Breast epithelium (tissue), 4 donors: ENCODE measurements at regions of chrX and their contacts with region 1.

Region 1: GRCh38 chrX:26032111-26032912 is 105.8 kb upstream of the MAGEB18 start:
- DNase-seq: no peak
- H3K4me3 ChIP-seq: no peak overlapping the region
- H3K27ac ChIP-seq: no peak overlapping the region
- H3K4me1 ChIP-seq: no peaks in the 10 kb centered on the region
- H3K27me3 ChIP-seq: peaks cover 0 to 3% of the 10 kb centered on the region in 2 donors
- CTCF ChIP-seq: no peak
- POLR2A ChIP-seq: no peak

Region 2: DNA sequence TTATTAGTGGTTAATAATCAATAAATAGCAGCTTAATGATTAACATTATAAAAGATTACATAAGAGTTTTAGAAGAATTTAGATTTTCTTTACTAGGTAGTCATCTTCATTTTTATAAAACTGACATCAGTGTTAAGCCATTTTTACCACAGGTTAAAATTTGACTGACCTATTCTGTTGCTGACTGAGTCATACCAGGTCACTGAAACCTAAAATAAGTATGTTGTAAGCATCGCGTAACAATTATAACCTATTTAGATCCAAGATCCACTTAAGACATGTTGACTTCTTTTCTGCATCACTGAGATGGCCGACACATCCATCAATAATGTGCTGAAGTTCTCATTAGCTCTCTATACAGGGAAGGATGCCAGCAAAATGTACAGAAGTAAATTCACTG is 1053.2 kb before region 1 on chrX:
- intact Hi-C with region 1: loop called (anchors 10 kb)
- DNase-seq: no peak
- H3K4me3 ChIP-seq: no peak overlapping the region
- H3K27ac ChIP-seq: no peak overlapping the region
- H3K4me1 ChIP-seq: no peaks in the 10 kb centered on the region
- H3K27me3 ChIP-seq: peaks cover 0 to 11% of the 10 kb centered on the region in 2 donors
- CTCF ChIP-seq: no peak
- POLR2A ChIP-seq: no peak